ENCODE measurements at regions of chr2 and their contacts with region 1.

Region 1: GRCh38 chr2:102240640-102241370 is 54.0 kb downstream of the IL1RL2 start:
- DNase-seq: peak; percentile 74 to 93 (median 85)
- ATAC-seq: peak; percentile 94
- H3K4me3 ChIP-seq: no peak overlapping the region
- H3K4me3 Mint-ChIP-seq: no peak overlapping the region
- H3K27ac ChIP-seq: no peak overlapping the region
- H3K27ac Mint-ChIP-seq: no peak overlapping the region
- H3K4me1 ChIP-seq: peaks cover 21% of the 10 kb centered on the region
- H3K4me1 Mint-ChIP-seq: peaks cover 9% of the 10 kb centered on the region
- H3K27me3 ChIP-seq: no peaks in the 10 kb centered on the region
- H3K27me3 Mint-ChIP-seq: no peaks in the 10 kb centered on the region
- CTCF ChIP-seq: peak; percentile 93

Region 2: DNA sequence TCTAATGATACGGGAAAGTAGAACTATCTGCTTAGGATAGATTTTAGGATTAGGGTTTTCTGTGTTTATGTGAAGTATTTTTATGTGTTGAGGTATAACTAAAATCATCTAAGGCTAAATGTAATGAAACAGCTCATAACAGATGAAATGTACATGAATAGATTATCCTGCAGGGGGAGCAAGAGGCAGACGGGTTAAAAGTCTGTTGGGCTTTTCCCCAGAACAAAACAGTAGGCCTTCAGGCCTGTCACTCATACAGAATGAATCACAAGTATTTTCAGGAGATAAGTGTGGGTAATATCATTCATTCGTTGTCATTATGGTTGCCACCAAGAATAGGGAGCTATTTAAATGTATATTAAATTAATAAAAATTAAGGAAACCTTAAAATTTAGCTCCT is 356.9 kb before region 1 on chr2:
- CTCF ChIA-PET with region 1: interaction called, 16 read pairs
- POLR2A ChIA-PET with region 1: interaction called, 5 read pairs
- intact Hi-C with region 1: loop called (anchors 1 to 5 kb)
- DNase-seq: peak in 5 of 14 experiments; percentile 5 to 65 (median 40)
- ATAC-seq: peak; percentile 48
- H3K4me3 ChIP-seq: no peak overlapping the region
- H3K4me3 Mint-ChIP-seq: no peak overlapping the region
- H3K27ac ChIP-seq: no peak overlapping the region
- H3K27ac Mint-ChIP-seq: no peak overlapping the region
- H3K4me1 ChIP-seq: no peaks in the 10 kb centered on the region
- H3K4me1 Mint-ChIP-seq: peaks cover 5% of the 10 kb centered on the region
- H3K27me3 ChIP-seq: no peaks in the 10 kb centered on the region
- H3K27me3 Mint-ChIP-seq: no peaks in the 10 kb centered on the region
- CTCF ChIP-seq: peak; percentile 56

Region 3: DNA sequence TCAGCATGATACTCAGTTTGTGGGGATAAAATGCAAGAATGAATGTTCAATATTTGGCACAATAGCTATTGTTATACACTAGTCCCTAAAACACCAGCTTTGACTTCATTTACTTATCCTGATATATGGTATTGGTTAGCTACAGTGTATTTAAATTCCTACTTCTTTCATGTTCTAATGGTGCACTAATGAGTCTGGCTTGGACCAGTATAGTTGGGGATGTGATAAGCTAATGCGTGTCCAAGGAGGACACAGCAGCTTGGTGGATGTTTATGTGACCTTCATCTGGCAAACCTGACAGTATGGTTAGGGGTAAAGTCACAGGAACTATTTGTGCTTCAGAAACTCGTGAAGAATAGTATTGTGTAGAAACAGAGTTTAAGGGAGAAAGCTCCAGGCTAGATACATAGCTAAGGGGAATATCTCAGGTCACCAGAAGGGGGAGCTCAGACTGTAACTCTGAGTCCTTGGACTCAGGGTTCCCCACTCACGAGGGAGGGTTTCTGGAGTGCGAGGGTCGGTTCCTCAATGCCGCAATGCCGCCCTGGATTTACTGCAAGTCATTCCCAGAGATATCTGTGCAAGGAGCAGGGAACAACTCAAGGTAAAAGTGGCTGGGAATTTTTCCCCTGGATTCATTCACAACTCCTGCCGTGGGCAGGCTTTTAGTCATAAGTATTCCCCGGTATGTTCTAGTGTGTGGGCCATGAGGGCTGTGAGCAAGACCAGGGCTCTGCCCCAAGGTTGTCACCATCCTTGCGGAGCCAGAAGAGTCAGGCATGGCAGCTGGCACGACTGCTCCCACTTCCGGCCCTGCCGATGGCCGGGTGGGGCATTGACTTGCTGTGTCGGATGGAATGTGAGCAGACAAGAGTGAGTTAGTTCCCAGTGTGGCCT is 234.6 kb before region 1 on chr2:
- CTCF ChIA-PET with region 1: interaction called, 11 read pairs
- POLR2A ChIA-PET with region 1: interaction called, 7 read pairs
- intact Hi-C with region 1: no loop called
- DNase-seq: peak in 7 of 14 experiments; percentile 9 to 68 (median 41)
- ATAC-seq: peak; percentile 51
- H3K4me3 ChIP-seq: no peak overlapping the region
- H3K4me3 Mint-ChIP-seq: no peak overlapping the region
- H3K27ac ChIP-seq: no peak overlapping the region
- H3K27ac Mint-ChIP-seq: no peak overlapping the region
- H3K4me1 ChIP-seq: peaks cover 15% of the 10 kb centered on the region
- H3K4me1 Mint-ChIP-seq: no peaks in the 10 kb centered on the region
- H3K27me3 ChIP-seq: no peaks in the 10 kb centered on the region
- H3K27me3 Mint-ChIP-seq: no peaks in the 10 kb centered on the region
- CTCF ChIP-seq: peak; percentile 63

Region 4: GRCh38 chr2:102172745-102173144 is 68.1 kb before region 1 on chr2:
- CTCF ChIA-PET with region 1: no interaction called
- POLR2A ChIA-PET with region 1: no interaction called
- intact Hi-C with region 1: no loop called
- DNase-seq: no peak
- ATAC-seq: no peak
- H3K4me3 ChIP-seq: no peak overlapping the region
- H3K4me3 Mint-ChIP-seq: no peak overlapping the region
- H3K27ac ChIP-seq: no peak overlapping the region
- H3K27ac Mint-ChIP-seq: no peak overlapping the region
- H3K4me1 ChIP-seq: peaks cover 3% of the 10 kb centered on the region
- H3K4me1 Mint-ChIP-seq: peaks cover 10% of the 10 kb centered on the region
- H3K27me3 ChIP-seq: no peaks in the 10 kb centered on the region
- H3K27me3 Mint-ChIP-seq: no peaks in the 10 kb centered on the region
- CTCF ChIP-seq: no peak

Region 5: GRCh38 chr2:102187496-102188150 is 53.2 kb before region 1 on chr2:
- CTCF ChIA-PET with region 1: interaction called, 16 read pairs
- POLR2A ChIA-PET with region 1: interaction called, 9 read pairs
- intact Hi-C with region 1: loop called (anchors 2 to 5 kb)
- DNase-seq: peak in 13 of 14 experiments; percentile 9 to 72 (median 33)
- ATAC-seq: peak; percentile 91
- H3K4me3 ChIP-seq: peak overlapping the region; percentile 58
- H3K4me3 Mint-ChIP-seq: peak overlapping the region; percentile 88
- H3K27ac ChIP-seq: no peak overlapping the region
- H3K27ac Mint-ChIP-seq: no peak overlapping the region
- H3K4me1 ChIP-seq: peaks cover 14% of the 10 kb centered on the region
- H3K4me1 Mint-ChIP-seq: peaks cover 11% of the 10 kb centered on the region
- H3K27me3 ChIP-seq: no peaks in the 10 kb centered on the region
- H3K27me3 Mint-ChIP-seq: peaks cover 39% of the 10 kb centered on the region
- CTCF ChIP-seq: peak; percentile 29

Region 6: DNA sequence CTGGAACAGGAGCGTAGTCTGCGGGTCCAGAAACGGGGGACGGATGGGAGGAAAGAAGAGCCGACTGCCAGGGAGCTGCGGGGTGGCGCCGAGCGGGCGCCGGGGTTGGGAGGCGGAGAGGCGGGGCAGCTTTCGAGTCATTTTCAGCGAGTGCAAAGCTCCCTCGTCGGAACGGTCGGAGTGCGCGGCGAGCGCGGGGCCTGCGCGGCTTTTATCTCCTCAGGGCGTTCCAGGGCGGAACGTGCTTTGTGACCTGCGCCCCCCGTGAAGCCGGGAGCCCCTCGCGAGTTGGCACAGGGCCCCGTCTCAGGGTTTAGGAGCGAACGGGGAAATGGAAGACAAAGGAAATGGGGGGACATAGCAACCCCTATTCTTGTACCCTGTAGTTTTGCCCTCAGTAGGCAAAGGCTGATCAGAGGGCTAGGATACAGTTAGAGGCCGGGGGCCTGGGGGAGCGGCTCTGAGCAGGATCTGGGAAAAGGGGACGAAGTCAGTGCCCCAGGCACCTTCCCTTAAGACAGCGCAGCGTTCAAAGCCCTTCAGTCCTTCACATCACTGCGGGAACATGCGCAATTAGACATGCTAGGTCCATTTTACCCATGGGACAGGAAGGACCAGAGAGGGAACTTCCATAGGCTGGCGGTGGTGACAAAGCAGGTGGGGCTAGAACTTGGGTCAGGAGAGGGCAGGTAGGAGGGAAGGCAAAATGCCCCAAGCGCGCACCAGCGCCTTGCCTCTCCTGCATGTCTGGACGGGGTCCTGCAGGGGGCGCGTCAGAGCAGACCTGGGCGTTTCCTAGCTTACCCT is 10.4 kb after region 1 on chr2:
- CTCF ChIA-PET with region 1: interaction called, 29 read pairs
- POLR2A ChIA-PET with region 1: interaction called, 10 read pairs
- intact Hi-C with region 1: no loop called
- DNase-seq: peak; percentile 48 to 84 (median 62)
- ATAC-seq: peak; percentile 87
- H3K4me3 ChIP-seq: peak overlapping the region; percentile 60
- H3K4me3 Mint-ChIP-seq: peak overlapping the region; percentile 96
- H3K27ac ChIP-seq: no peak overlapping the region
- H3K27ac Mint-ChIP-seq: peak overlapping the region; percentile 12
- H3K4me1 ChIP-seq: peaks cover 19% of the 10 kb centered on the region
- H3K4me1 Mint-ChIP-seq: peaks cover 23% of the 10 kb centered on the region
- H3K27me3 ChIP-seq: no peaks in the 10 kb centered on the region
- H3K27me3 Mint-ChIP-seq: no peaks in the 10 kb centered on the region
- CTCF ChIP-seq: peak; percentile 90

Region 7: DNA sequence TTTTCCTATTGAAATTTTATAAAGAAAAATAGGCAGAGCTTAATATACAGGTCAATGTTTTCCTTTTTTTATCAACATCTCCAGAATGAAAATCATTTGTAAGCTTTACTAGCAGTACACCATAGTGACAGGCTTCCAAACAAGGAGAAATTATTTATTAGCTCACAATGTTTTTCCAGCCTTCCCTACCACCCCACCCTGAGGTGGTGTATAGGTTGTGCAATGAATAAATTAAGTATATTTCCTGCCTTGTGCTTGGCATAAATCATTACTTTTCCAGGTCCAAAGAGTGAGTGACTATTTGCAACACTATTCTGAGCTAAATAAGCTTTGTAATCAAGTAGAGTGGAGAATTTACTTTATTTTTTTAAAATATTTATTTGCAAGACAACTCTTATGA is 1736.9 kb after region 1 on chr2:
- CTCF ChIA-PET with region 1: no interaction called
- POLR2A ChIA-PET with region 1: no interaction called
- intact Hi-C with region 1: no loop called
- DNase-seq: no peak
- ATAC-seq: no peak
- H3K4me3 ChIP-seq: no peak overlapping the region
- H3K4me3 Mint-ChIP-seq: no peak overlapping the region
- H3K27ac ChIP-seq: no peak overlapping the region
- H3K27ac Mint-ChIP-seq: no peak overlapping the region
- H3K4me1 ChIP-seq: no peaks in the 10 kb centered on the region
- H3K4me1 Mint-ChIP-seq: no peaks in the 10 kb centered on the region
- H3K27me3 ChIP-seq: no peaks in the 10 kb centered on the region
- H3K27me3 Mint-ChIP-seq: no peaks in the 10 kb centered on the region
- CTCF ChIP-seq: no peak